CD8-positive, alpha-beta T cell (primary cell): ENCODE measurements at regions of chr21 and their contacts with region 1.

Region 1: GRCh38 chr21:45140346-45140940 is 66.1 kb downstream of the ADARB1 start:
- DNase-seq: peak; percentile 32 to 80 (median 62)
- ATAC-seq: peak; percentile 93
- H3K4me3 ChIP-seq: no peak overlapping the region
- H3K4me3 Mint-ChIP-seq: no peak overlapping the region
- H3K27ac ChIP-seq: no peak overlapping the region
- H3K27ac Mint-ChIP-seq: no peak overlapping the region
- H3K4me1 ChIP-seq: no peaks in the 10 kb centered on the region
- H3K4me1 Mint-ChIP-seq: peaks cover 6% of the 10 kb centered on the region
- H3K27me3 ChIP-seq: no peaks in the 10 kb centered on the region
- H3K27me3 Mint-ChIP-seq: no peaks in the 10 kb centered on the region
- CTCF ChIP-seq: peak; percentile 48

Region 2: GRCh38 chr21:44723177-44724131 is 417.0 kb before region 1 on chr21:
- CTCF ChIA-PET with region 1: no interaction called
- POLR2A ChIA-PET with region 1: no interaction called
- intact Hi-C with region 1: no loop called
- DNase-seq: peak in 5 of 9 experiments; percentile 29 to 64 (median 56)
- ATAC-seq: peak; percentile 55
- H3K4me3 ChIP-seq: peak overlapping the region; percentile 25 to 55
- H3K4me3 Mint-ChIP-seq: peak overlapping the region; percentile 78
- H3K27ac ChIP-seq: peak overlapping the region in 1 of 2 experiments; percentile 15
- H3K27ac Mint-ChIP-seq: peak overlapping the region; percentile 32
- H3K4me1 ChIP-seq: peaks cover 19% of the 10 kb centered on the region
- H3K4me1 Mint-ChIP-seq: peaks cover 12% of the 10 kb centered on the region
- H3K27me3 ChIP-seq: peaks cover 0 to 25% of the 10 kb centered on the region in 2 experiments
- H3K27me3 Mint-ChIP-seq: peaks cover 13% of the 10 kb centered on the region
- CTCF ChIP-seq: no peak

Region 3: DNA sequence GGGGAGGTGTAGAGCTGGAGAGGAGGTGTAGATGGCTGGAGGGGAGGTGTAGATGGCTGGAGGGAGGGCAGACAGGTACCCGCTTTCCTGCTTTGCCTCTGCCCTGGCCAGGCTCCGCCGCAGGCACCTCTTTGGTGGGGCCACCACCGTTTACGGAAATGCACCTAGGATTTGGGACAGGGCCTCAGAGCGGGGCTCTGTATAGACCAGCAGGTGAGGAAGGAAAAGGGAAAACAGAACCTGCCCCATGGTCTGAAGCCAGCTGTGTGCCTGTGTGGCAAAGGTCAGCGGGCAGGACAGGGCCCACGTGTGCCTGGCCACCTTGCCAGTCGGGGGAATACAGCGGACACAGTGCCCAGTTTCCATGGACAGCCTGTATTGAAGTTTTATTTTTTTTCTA is 254.8 kb before region 1 on chr21:
- CTCF ChIA-PET with region 1: no interaction called
- POLR2A ChIA-PET with region 1: no interaction called
- intact Hi-C with region 1: no loop called
- DNase-seq: no peak
- ATAC-seq: no peak
- H3K4me3 ChIP-seq: no peak overlapping the region
- H3K4me3 Mint-ChIP-seq: no peak overlapping the region
- H3K27ac ChIP-seq: no peak overlapping the region
- H3K27ac Mint-ChIP-seq: no peak overlapping the region
- H3K4me1 ChIP-seq: peaks cover 22% of the 10 kb centered on the region
- H3K4me1 Mint-ChIP-seq: peaks cover 18% of the 10 kb centered on the region
- H3K27me3 ChIP-seq: no peaks in the 10 kb centered on the region
- H3K27me3 Mint-ChIP-seq: no peaks in the 10 kb centered on the region
- CTCF ChIP-seq: no peak

Region 4: GRCh38 chr21:44939532-44940115 is 200.8 kb before region 1 on chr21 and contains the start of gene SLX9:
- CTCF ChIA-PET with region 1: interaction called, 239 read pairs
- POLR2A ChIA-PET with region 1: no interaction called
- intact Hi-C with region 1: no loop called
- DNase-seq: peak; percentile 57 to 90 (median 78)
- ATAC-seq: peak; percentile 90
- H3K4me3 ChIP-seq: peak within 1 kb of the TSS; percentile 72 to 79
- H3K4me3 Mint-ChIP-seq: peak within 1 kb of the TSS; percentile 86
- H3K27ac ChIP-seq: peak within 1 kb of the TSS; percentile 40 to 56
- H3K27ac Mint-ChIP-seq: peak within 1 kb of the TSS; percentile 87
- H3K4me1 ChIP-seq: peaks cover 36% of the 10 kb centered on the region
- H3K4me1 Mint-ChIP-seq: peaks cover 41% of the 10 kb centered on the region
- H3K27me3 ChIP-seq: no peaks in the 10 kb centered on the region
- H3K27me3 Mint-ChIP-seq: no peaks in the 10 kb centered on the region
- CTCF ChIP-seq: no peak
- total RNA-seq, gene SLX9: 8.2 to 10.0 TPM

Region 5: DNA sequence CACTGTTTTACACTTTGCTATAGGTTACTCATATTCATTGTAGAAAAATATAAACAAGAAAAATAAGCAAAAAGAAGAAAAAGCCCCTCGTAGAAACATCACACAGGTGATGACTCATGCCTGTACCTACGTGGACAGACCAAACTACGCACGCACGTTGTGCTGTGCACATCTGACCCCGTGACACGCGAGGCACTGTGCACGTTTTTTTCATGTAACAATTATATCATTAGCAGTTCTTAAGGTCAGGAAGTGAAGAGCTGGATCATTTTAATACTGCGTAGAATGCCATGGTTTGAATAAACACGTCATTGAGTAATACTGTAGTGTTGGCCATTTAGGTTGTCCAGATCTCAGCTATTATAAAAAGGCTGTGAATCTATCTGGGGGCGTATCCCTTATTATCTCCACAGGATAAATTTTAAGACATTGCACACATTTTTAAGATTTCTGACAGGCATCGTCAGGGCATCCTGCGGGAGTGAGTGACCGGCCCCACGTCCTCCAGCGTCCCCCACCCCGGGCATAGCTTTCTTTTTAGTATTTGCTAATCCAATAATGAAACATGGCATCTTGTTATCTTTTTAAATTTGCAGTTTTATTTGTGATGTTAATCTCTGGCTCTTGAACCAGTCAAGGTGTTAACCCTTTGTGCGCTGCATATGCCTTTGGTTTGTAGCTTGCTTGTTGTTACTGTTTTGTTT is 89.5 kb before region 1 on chr21:
- CTCF ChIA-PET with region 1: interaction called, 13 read pairs
- POLR2A ChIA-PET with region 1: no interaction called
- intact Hi-C with region 1: no loop called
- DNase-seq: no peak
- ATAC-seq: no peak
- H3K4me3 ChIP-seq: no peak overlapping the region
- H3K4me3 Mint-ChIP-seq: no peak overlapping the region
- H3K27ac ChIP-seq: no peak overlapping the region
- H3K27ac Mint-ChIP-seq: no peak overlapping the region
- H3K4me1 ChIP-seq: no peaks in the 10 kb centered on the region
- H3K4me1 Mint-ChIP-seq: no peaks in the 10 kb centered on the region
- H3K27me3 ChIP-seq: no peaks in the 10 kb centered on the region
- H3K27me3 Mint-ChIP-seq: peaks cover 21% of the 10 kb centered on the region
- CTCF ChIP-seq: no peak

Region 6: GRCh38 chr21:45074048-45074817 is 66.2 kb before region 1 on chr21 and contains the start of gene ADARB1:
- CTCF ChIA-PET with region 1: interaction called, 27 read pairs
- POLR2A ChIA-PET with region 1: no interaction called
- intact Hi-C with region 1: no loop called
- DNase-seq: peak; percentile 24 to 87 (median 63)
- ATAC-seq: peak; percentile 55
- H3K4me3 ChIP-seq: peak within 1 kb of the TSS; percentile 58 to 69
- H3K4me3 Mint-ChIP-seq: peak within 1 kb of the TSS; percentile 95
- H3K27ac ChIP-seq: peak within 1 kb of the TSS; percentile 36 to 68
- H3K27ac Mint-ChIP-seq: peak within 1 kb of the TSS; percentile 92
- H3K4me1 ChIP-seq: peaks cover 38% of the 10 kb centered on the region
- H3K4me1 Mint-ChIP-seq: peaks cover 41% of the 10 kb centered on the region
- H3K27me3 ChIP-seq: no peaks in the 10 kb centered on the region
- H3K27me3 Mint-ChIP-seq: no peaks in the 10 kb centered on the region
- CTCF ChIP-seq: no peak
- total RNA-seq, gene ADARB1: 21.1 to 22.6 TPM

Region 7: DNA sequence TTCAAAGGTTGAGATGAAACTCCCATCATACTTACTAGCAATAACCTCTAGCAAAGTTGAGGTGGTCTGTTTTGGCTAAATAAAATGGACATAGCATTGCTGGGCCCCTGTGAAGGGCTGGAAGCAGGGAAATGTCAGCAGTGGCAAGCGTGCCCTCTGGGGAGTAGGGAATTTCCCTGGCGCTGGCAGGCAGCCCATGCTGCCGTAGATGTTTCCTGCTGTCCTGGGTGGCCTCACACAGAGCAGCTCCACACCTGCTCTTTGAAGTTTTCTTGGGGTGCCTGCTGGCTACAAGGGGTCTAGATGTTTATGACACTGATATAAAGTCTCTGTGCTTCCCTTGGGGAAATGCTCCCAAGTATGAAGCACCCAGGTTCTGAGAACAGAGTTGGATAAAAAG is 35.9 kb before region 1 on chr21:
- CTCF ChIA-PET with region 1: interaction called, 10 read pairs
- POLR2A ChIA-PET with region 1: no interaction called
- intact Hi-C with region 1: no loop called
- DNase-seq: peak in 2 of 9 experiments; percentile 47 to 70
- ATAC-seq: peak; percentile 64
- H3K4me3 ChIP-seq: no peak overlapping the region
- H3K4me3 Mint-ChIP-seq: peak overlapping the region; percentile 39
- H3K27ac ChIP-seq: no peak overlapping the region
- H3K27ac Mint-ChIP-seq: peak overlapping the region; percentile 32
- H3K4me1 ChIP-seq: peaks cover 23% of the 10 kb centered on the region
- H3K4me1 Mint-ChIP-seq: peaks cover 66% of the 10 kb centered on the region
- H3K27me3 ChIP-seq: no peaks in the 10 kb centered on the region
- H3K27me3 Mint-ChIP-seq: no peaks in the 10 kb centered on the region
- CTCF ChIP-seq: no peak

Region 8: GRCh38 chr21:45130324-45130774 is 10.1 kb before region 1 on chr21:
- CTCF ChIA-PET with region 1: interaction called, 131 read pairs
- POLR2A ChIA-PET with region 1: no interaction called
- intact Hi-C with region 1: no loop called
- DNase-seq: no peak
- ATAC-seq: no peak
- H3K4me3 ChIP-seq: no peak overlapping the region
- H3K4me3 Mint-ChIP-seq: no peak overlapping the region
- H3K27ac ChIP-seq: no peak overlapping the region
- H3K27ac Mint-ChIP-seq: no peak overlapping the region
- H3K4me1 ChIP-seq: peaks cover 5% of the 10 kb centered on the region
- H3K4me1 Mint-ChIP-seq: peaks cover 21% of the 10 kb centered on the region
- H3K27me3 ChIP-seq: no peaks in the 10 kb centered on the region
- H3K27me3 Mint-ChIP-seq: no peaks in the 10 kb centered on the region
- CTCF ChIP-seq: no peak

Region 9: GRCh38 chr21:45439161-45439872 is 298.9 kb after region 1 on chr21:
- CTCF ChIA-PET with region 1: interaction called, 37 read pairs
- POLR2A ChIA-PET with region 1: interaction called, 3 read pairs
- intact Hi-C with region 1: no loop called
- DNase-seq: peak; percentile 71 to 93 (median 86)
- ATAC-seq: peak; percentile 87
- H3K4me3 ChIP-seq: peak overlapping the region; percentile 26 to 29
- H3K4me3 Mint-ChIP-seq: peak overlapping the region; percentile 65
- H3K27ac ChIP-seq: peak overlapping the region in 1 of 2 experiments; percentile 40
- H3K27ac Mint-ChIP-seq: no peak overlapping the region
- H3K4me1 ChIP-seq: peaks cover 6% of the 10 kb centered on the region
- H3K4me1 Mint-ChIP-seq: peaks cover 6% of the 10 kb centered on the region
- H3K27me3 ChIP-seq: peaks cover 0 to 9% of the 10 kb centered on the region in 2 experiments
- H3K27me3 Mint-ChIP-seq: peaks cover 11% of the 10 kb centered on the region
- CTCF ChIP-seq: peak; percentile 90